Activated CD4-positive, alpha-beta T cell treated with anti-CD3 and anti-CD28 coated beads, Interleukin-2, amount 10 ng/mL, durations not matched to agents 24 days and 14 days (primary cell): ENCODE measurements at regions of chr1 and their contacts with region 1.

Region 1: DNA sequence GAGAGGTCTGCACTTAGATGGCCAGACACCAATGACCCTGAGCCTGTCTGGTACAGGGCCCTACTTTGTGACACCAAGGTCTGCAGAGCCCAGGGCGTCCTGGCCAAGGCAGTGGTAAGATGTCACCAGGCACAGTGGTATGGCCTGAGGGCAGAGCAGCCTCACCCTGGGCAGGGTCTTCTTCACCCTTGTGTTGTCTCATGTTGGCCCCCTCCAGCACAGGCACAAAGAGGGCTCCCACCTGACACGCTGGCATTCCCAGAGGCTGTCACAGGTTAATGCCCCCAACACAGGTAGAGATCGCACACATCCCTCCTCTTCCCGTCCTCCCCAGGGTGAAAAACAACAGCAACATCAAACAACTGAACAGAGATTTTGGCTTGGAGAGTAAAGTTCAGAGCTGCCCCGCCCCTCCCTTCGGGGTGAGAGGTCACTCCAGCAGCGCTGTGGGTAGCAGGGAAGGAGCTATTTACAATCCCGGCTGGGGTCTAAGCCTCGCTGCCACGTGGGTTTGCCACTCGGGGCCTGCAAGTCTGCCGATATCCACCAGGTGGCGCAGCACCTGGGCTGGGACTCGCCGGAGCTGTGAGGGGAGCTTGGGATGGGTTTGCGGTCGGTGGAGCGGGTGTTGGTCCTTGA is 12.6 kb downstream of the EFNA3 start:
- DNase-seq: peak; percentile 95
- H3K4me3 Mint-ChIP-seq: no peak overlapping the region
- H3K27ac Mint-ChIP-seq: peak overlapping the region; percentile 5
- H3K4me1 Mint-ChIP-seq: peaks cover 7% of the 10 kb centered on the region
- H3K27me3 Mint-ChIP-seq: peaks cover 23% of the 10 kb centered on the region

Region 2: DNA sequence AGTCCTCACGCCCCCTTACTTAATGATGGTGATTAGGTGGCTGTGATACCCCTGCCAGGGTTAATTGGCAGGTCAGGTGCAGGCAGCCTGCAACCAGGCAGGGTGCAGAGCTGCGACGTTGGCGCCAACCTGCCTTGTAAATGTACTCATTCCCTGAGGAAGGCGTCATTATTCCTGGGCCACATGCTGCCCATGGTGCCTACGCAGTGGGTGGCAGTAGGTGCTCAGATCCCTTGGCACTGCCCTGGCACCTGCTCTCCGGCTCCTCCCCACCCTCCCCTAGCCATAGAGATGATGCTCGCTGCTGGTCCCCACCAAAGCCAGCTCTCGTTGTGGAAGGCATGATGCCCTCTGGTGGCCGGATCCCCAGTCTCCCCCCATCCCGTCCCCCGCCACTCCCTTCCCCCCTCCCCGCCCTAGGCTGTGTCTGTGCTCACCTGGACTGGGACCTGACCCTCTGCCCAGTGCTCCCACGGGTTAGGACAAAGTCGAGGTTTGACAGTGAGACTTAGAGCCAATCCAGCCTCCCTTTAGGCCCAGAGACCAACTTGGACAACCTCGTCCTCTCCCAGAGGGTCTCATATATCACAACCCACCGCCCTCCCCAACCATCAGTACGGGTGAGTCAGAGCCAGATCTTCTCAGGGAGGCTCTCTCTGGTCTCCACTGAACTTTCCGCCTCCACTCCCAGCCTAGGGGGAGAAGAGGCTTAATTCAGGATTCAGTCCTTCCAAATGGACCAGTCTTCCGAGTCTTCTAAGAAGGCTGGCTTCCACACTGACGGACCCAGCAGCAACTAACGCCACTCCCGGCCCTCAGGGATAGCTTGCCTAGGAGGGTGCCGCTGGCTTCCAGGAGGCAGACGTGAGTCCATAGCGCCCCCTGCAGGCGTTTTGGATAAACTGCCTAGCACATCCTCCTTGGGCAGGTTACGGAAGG is 76.2 kb after region 1 on chr1:
- intact Hi-C with region 1: loop called (anchors 1 kb)
- DNase-seq: peak; percentile 96
- H3K4me3 Mint-ChIP-seq: peak overlapping the region; percentile 68
- H3K27ac Mint-ChIP-seq: peak overlapping the region; percentile 29
- H3K4me1 Mint-ChIP-seq: peaks cover 24% of the 10 kb centered on the region
- H3K27me3 Mint-ChIP-seq: peaks cover 4% of the 10 kb centered on the region

Region 3: GRCh38 chr1:155379631-155380090 is 288.5 kb after region 1 on chr1:
- intact Hi-C with region 1: no loop called
- DNase-seq: no peak
- H3K4me3 Mint-ChIP-seq: no peak overlapping the region
- H3K27ac Mint-ChIP-seq: no peak overlapping the region
- H3K4me1 Mint-ChIP-seq: peaks cover 7% of the 10 kb centered on the region
- H3K27me3 Mint-ChIP-seq: no peaks in the 10 kb centered on the region